ENCODE measurements at regions of chr6 and their contacts with region 1.

Region 1: GRCh38 chr6:81734085-81734484 is 18.4 kb downstream of the TENT5A start:
- DNase-seq: no peak
- CTCF ChIP-seq: no peak

Region 2: GRCh38 chr6:81747327-81747726 is 13.2 kb after region 1 on chr6:
- CTCF ChIA-PET with region 1: interaction called, 16 read pairs
- POLR2A ChIA-PET with region 1: no interaction called
- DNase-seq: no peak
- CTCF ChIP-seq: no peak

Region 3: DNA sequence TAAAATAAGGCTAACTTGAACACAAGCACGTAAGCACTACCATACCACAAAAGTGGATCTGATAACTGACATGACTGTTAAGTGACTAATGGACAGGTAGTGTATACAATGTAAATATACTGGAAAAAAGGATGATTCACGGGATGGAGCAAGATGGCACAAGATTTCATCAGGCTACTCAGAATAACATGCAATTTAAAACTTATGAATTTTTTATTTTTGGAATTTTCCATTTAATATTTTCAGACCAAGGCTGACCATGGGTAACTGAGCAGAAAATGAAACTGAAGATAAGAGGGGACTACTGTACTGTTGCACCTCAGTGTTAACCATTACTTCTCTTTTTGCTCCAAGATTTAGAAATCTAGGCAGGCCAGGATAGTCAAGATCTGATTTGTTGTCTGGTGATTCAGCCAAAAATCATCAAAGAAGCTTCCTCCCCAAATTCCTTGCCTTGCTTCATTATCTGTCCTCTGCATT is 674.9 kb after region 1 on chr6:
- CTCF ChIA-PET with region 1: no interaction called
- POLR2A ChIA-PET with region 1: no interaction called
- DNase-seq: no peak
- CTCF ChIP-seq: no peak

Measured in GM10248 (cell line).